Activated CD4-positive, alpha-beta T cell treated with anti-CD3 and anti-CD28 coated beads for 36 hours (primary cell): ENCODE measurements at regions of chr15 and their contacts with region 1.

Region 1: GRCh38 chr15:85794603-85795336 is at the start of gene KLHL25:
- DNase-seq: peak; percentile 95
- ATAC-seq: peak; percentile 94
- H3K4me3 Mint-ChIP-seq: peak within 1 kb of the TSS; percentile 83
- H3K27ac Mint-ChIP-seq: peak within 1 kb of the TSS; percentile 76
- H3K4me1 Mint-ChIP-seq: peaks cover 37% of the 10 kb centered on the region
- H3K27me3 Mint-ChIP-seq: no peaks in the 10 kb centered on the region
- total RNA-seq, gene KLHL25: 4.9 to 5.2 TPM

Region 2: GRCh38 chr15:84981054-84981710 is 813.6 kb before region 1 on chr15:
- CTCF ChIA-PET with region 1: interaction called, 3 read pairs
- POLR2A ChIA-PET with region 1: no interaction called
- intact Hi-C with region 1: loop called in 1 of 2 experiments (anchors 2 kb)
- DNase-seq: peak; percentile 97
- ATAC-seq: peak; percentile 80
- H3K4me3 Mint-ChIP-seq: peak overlapping the region; percentile 84
- H3K27ac Mint-ChIP-seq: peak overlapping the region; percentile 89
- H3K4me1 Mint-ChIP-seq: peaks cover 43% of the 10 kb centered on the region
- H3K27me3 Mint-ChIP-seq: no peaks in the 10 kb centered on the region

Region 3: DNA sequence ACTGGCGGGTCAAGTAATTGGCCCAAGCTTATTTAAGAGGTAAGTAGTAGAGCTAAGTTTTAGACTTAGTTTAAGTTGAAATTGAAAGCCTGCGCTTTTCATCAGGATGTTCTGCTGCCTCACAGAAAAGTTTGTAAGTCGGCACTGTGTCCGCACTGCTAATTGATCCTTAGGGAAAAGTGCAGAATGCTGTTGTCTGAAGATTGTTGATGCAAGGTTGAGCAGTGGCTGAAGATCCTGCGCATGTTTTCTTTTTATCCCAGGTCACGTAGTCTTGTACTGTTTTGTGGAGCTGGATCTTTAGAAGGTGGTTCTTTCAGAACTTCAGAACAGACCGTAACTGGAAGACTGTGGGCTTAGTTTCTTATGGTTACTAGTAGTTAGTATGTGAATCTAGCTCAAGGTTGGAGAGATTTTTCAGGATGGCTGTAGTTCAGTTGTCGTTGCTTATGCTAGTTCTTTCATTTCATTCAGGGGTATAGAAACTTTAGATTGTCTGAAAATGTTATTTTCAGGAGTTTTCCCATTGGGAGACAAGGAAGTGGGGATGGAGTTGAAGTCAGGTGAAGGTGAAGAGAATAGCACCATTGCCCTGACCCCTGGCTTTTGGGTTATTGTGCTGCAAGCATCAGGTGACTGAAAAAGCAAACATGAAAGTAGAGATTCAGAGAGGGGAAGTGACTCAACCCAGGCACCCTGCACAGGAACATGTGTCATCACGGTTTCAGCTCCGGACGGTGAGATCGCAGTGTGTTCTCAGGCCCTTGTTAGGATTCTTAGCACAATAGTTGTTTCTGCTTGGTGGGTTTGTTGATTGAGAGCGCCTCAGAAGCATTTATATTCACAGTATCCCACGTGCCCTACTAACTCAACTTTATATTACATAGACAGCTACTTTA is 381.6 kb before region 1 on chr15:
- CTCF ChIA-PET with region 1: no interaction called
- POLR2A ChIA-PET with region 1: no interaction called
- intact Hi-C with region 1: loop called in 1 of 2 experiments (anchors 5 kb)
- DNase-seq: peak; percentile 88
- ATAC-seq: peak; percentile 95
- H3K4me3 Mint-ChIP-seq: peak overlapping the region; percentile 16
- H3K27ac Mint-ChIP-seq: peak overlapping the region; percentile 77
- H3K4me1 Mint-ChIP-seq: peaks cover 79% of the 10 kb centered on the region
- H3K27me3 Mint-ChIP-seq: no peaks in the 10 kb centered on the region

Region 4: GRCh38 chr15:85534031-85534430 is 260.7 kb before region 1 on chr15:
- CTCF ChIA-PET with region 1: no interaction called
- POLR2A ChIA-PET with region 1: interaction called, 10 read pairs
- intact Hi-C with region 1: no loop called
- DNase-seq: peak; percentile 14
- ATAC-seq: peak; percentile 88
- H3K4me3 Mint-ChIP-seq: no peak overlapping the region
- H3K27ac Mint-ChIP-seq: peak overlapping the region; percentile 79
- H3K4me1 Mint-ChIP-seq: peaks cover 40% of the 10 kb centered on the region
- H3K27me3 Mint-ChIP-seq: no peaks in the 10 kb centered on the region

Region 5: DNA sequence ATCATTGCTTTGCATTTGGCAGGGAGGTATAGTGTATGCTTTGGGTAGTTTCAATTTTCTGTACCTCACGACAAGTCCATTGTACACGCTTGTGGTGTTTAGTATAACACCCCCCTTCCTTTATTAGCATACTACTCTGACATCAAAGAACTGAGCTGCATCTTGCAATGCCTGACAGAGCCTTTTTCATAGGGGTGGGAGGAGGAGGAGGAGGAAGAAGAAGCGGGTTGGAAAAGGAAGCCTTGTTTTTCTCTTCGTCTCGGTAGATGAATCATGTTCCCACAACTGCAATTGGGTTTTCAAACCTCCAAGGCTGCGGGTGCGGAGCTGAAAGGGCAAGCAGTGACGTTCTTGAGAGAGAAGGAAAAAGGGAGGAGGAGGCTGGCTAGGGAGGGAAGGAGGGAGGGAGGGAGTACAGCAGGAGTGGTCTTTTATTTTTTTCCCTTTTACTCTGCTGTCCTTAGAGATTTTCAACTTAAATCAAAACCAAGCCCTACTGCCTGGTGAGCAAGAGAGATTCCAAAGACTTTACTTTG is 175.7 kb before region 1 on chr15:
- CTCF ChIA-PET with region 1: no interaction called
- POLR2A ChIA-PET with region 1: no interaction called
- intact Hi-C with region 1: loop called in 1 of 2 experiments (anchors 5 kb)
- DNase-seq: peak; percentile 78
- ATAC-seq: peak; percentile 90
- H3K4me3 Mint-ChIP-seq: no peak overlapping the region
- H3K27ac Mint-ChIP-seq: no peak overlapping the region
- H3K4me1 Mint-ChIP-seq: peaks cover 48% of the 10 kb centered on the region
- H3K27me3 Mint-ChIP-seq: no peaks in the 10 kb centered on the region

Region 6: GRCh38 chr15:85707519-85708338 is 87.0 kb before region 1 on chr15:
- CTCF ChIA-PET with region 1: interaction called, 3 read pairs
- POLR2A ChIA-PET with region 1: no interaction called
- intact Hi-C with region 1: loop called in 1 of 2 experiments (anchors 1 kb)
- DNase-seq: peak; percentile 47
- ATAC-seq: peak; percentile 13
- H3K4me3 Mint-ChIP-seq: peak overlapping the region; percentile 68
- H3K27ac Mint-ChIP-seq: peak overlapping the region; percentile 96
- H3K4me1 Mint-ChIP-seq: peaks cover 90% of the 10 kb centered on the region
- H3K27me3 Mint-ChIP-seq: no peaks in the 10 kb centered on the region

Region 7: DNA sequence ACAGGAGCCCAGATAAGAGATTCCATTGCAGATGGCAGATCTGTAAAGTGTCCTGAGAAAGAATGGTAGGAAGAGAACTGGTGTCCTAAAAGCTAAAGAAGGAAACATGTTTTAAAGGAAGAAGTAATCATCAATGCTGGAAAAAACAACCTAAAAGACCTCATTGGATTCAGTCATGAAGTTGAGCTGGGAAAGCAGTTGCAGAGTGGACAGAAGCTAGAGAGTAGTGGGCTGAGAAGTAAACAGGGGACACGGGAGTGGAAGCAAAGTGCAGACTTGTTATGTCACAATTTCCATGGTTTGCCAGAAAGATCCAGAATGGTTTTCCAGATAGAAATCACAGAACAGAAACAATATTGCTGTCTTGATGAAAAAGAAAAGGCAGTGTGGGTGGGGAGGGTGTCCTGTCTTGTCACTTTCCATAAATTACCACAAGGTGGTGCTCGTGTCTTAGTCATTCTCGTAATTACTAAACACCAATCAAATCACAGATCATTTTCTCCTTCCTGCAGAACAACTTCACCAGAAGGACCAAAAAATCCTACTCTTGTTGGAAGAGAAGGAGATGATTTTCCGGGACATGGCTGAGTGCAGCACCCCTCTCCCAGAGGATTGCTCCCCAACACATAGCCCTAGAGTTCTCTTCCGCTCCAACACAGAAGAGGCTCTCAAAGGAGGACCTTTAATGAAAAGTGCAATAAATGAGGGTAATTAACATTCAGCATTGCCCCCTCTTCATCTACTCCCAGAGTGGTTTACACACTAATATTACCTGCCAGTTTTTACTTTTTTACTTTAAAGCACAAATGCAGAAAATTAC is 64.6 kb before region 1 on chr15:
- CTCF ChIA-PET with region 1: interaction called, 4 read pairs
- POLR2A ChIA-PET with region 1: no interaction called
- intact Hi-C with region 1: loop called in 1 of 2 experiments (anchors 1 kb)
- DNase-seq: peak; percentile 57
- ATAC-seq: peak; percentile 79
- H3K4me3 Mint-ChIP-seq: no peak overlapping the region
- H3K27ac Mint-ChIP-seq: peak overlapping the region; percentile 88
- H3K4me1 Mint-ChIP-seq: peaks cover 27% of the 10 kb centered on the region
- H3K27me3 Mint-ChIP-seq: no peaks in the 10 kb centered on the region